ENCODE measurements at regions of chr11 and their contacts with region 1.

Region 1: GRCh38 chr11:35391922-35392813 is 27.2 kb downstream of the SLC1A2 start:
- DNase-seq: peak; percentile 61
- H3K4me3 Mint-ChIP-seq: no peak overlapping the region
- H3K27ac Mint-ChIP-seq: no peak overlapping the region
- H3K4me1 Mint-ChIP-seq: peaks cover 26% of the 10 kb centered on the region
- H3K27me3 Mint-ChIP-seq: peaks cover 14% of the 10 kb centered on the region

Region 2: GRCh38 chr11:34512840-34513681 is 879.1 kb before region 1 on chr11:
- intact Hi-C with region 1: loop called (anchors 2 kb)
- DNase-seq: peak; percentile 16
- H3K4me3 Mint-ChIP-seq: no peak overlapping the region
- H3K27ac Mint-ChIP-seq: no peak overlapping the region
- H3K4me1 Mint-ChIP-seq: no peaks in the 10 kb centered on the region
- H3K27me3 Mint-ChIP-seq: peaks cover 3% of the 10 kb centered on the region

Region 3: GRCh38 chr11:34916015-34916842 is 475.9 kb before region 1 on chr11 and contains the starts of genes APIP and PDHX:
- intact Hi-C with region 1: loop called (anchors 2 kb)
- DNase-seq: peak; percentile 90
- H3K4me3 Mint-ChIP-seq: peak within 1 kb of the TSS; percentile 98
- H3K27ac Mint-ChIP-seq: peak within 1 kb of the TSS; percentile 91
- H3K4me1 Mint-ChIP-seq: peaks cover 42% of the 10 kb centered on the region
- H3K27me3 Mint-ChIP-seq: no peaks in the 10 kb centered on the region
- total RNA-seq, gene APIP: 26.3 and 26.8 TPM in 2 replicates
- total RNA-seq, gene PDHX: 32.0 TPM in 2 replicates

Region 4: DNA sequence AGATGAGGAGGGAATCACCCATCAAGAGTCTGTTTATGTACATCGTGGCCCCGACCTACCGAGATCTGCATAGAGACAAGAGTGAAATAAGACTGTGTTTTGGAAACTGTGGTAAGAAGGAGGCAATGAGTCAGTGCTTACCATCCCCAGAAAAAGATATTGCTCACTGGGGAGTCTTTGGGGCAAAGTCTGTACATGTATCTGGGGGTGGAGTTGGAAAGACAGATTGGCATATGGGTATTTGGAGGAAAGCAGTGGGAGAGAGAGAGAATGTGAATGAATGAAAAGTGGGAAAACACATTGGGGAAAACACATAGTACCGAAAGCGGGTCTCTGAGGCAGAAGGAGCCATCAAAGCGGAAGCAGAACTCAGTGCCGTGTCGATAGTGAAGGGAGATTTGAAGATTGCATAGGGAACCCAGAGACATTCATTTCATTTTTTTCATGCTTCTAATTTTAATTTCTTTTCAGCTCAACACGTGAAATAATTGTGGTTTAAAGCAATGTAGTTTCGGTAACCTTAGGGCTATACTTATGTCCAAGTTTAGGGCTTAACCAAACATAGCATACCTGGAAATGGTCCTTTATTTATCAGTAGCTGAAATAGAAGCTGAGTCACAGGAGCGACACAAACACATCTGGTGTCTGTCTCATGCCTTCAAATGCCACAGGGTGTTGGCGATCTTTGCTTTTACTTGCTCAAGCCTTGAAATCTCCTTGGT is 351.8 kb before region 1 on chr11:
- intact Hi-C with region 1: loop called (anchors 1 kb)
- DNase-seq: peak; percentile 70
- H3K4me3 Mint-ChIP-seq: peak overlapping the region; percentile 72
- H3K27ac Mint-ChIP-seq: peak overlapping the region; percentile 93
- H3K4me1 Mint-ChIP-seq: peaks cover 66% of the 10 kb centered on the region
- H3K27me3 Mint-ChIP-seq: peaks cover 2% of the 10 kb centered on the region

Region 5: DNA sequence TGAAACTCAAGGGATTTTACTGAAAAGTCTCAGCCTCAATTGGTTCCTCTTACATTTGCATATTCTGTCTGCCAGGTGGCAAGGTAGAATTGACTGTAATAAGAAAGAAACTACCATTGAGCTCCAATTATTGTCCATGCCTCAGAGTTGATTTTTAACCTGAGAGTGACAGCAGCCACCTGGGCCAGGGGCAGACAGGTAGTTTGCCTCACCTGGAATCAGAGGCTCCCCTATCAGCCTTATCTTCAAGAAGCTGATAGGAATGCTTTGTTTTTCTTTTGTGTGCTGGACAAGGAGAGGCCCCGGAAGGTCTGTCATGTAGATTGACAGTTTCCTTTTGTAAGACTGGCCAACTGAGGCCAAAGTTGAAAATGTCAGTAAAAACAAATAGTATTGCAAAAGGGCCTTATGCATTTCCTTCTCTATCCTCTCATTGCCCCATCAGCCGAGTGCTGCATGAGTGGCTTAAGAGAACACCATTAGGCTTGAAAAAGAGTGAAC is 219.1 kb before region 1 on chr11:
- intact Hi-C with region 1: loop called (anchors 1 kb)
- DNase-seq: no peak
- H3K4me3 Mint-ChIP-seq: peak overlapping the region; percentile 56
- H3K27ac Mint-ChIP-seq: peak overlapping the region; percentile 75
- H3K4me1 Mint-ChIP-seq: peaks cover 92% of the 10 kb centered on the region
- H3K27me3 Mint-ChIP-seq: no peaks in the 10 kb centered on the region

Region 6: DNA sequence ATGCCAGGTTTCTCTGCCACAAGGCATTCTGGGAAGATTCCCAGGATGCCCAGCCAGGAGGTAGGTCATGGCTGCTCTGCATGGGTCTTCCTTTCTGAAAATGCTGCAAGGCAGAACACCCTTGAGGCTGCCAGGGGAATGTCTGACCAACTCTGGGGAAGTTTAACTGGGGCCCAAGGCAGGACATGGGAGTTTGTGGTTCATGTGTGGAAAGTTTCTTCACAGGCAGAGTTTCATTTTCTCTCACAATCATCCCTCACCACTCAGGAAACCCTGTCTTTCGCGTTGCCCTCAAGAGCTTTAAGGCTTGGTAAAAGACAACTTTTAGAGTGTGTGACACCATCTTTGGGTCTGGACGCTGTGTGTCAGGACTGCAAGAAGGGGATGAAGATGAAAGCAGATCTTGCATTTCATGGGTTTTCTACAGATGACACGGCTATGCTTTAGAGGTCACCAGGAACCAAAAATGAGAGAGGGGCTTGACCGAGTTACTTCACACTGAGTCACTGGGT is 119.7 kb before region 1 on chr11:
- intact Hi-C with region 1: loop called (anchors 1 kb)
- DNase-seq: peak; percentile 54
- H3K4me3 Mint-ChIP-seq: peak overlapping the region; percentile 3
- H3K27ac Mint-ChIP-seq: peak overlapping the region; percentile 86
- H3K4me1 Mint-ChIP-seq: peaks cover 61% of the 10 kb centered on the region
- H3K27me3 Mint-ChIP-seq: peaks cover 12% of the 10 kb centered on the region

Measured in activated T-helper 1 cell treated with anti-CD3 and anti-CD28 coated beads, Interleukin-12 subunit alpha, Interleukin-12 subunit beta, Interleukin-2, Interleukin-4 antibody, amounts not matched to agents 30 ng/mL and 10 ng/mL and 1 ng/mL, durations not matched to agents 14 hours and 24 hours and 36 hours (primary cell).